Esophagus squamous epithelium (tissue), 5 donors: ENCODE measurements at regions of chr4 and their contacts with region 1.

Region 1: DNA sequence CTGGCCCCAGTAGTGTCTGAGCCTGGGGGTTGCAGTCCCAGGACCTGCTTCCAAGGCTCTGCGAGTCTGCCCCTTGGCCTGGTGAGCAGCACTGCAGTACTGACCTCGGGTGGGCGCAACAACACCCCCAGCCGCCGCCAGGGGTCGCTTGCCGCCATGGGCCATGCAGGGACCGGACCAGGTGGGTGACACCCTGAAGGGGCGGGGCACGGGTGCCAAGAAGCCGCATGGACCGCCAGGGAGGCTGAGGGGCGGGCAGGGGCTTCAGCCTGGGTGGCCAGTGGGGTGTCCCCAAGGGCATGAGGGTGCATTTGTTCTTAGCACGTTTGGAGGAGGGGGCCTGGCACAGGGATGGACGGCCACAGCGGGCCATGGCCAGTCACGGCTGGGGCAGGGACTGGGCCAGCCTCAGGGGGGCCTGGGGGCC is 25.0 kb downstream of the TACC3 start:
- DNase-seq: no peak
- H3K4me3 ChIP-seq: no peak overlapping the region
- H3K27ac ChIP-seq: no peak overlapping the region
- H3K4me1 ChIP-seq: peaks cover 12 to 36% (median 13%) of the 10 kb centered on the region in 3 donors
- H3K27me3 ChIP-seq: peaks cover 0 to 10% (median 0%) of the 10 kb centered on the region in 4 donors
- CTCF ChIP-seq: peak; percentile 56 to 85 (median 77)
- POLR2A ChIP-seq: no peak

Region 2: GRCh38 chr4:1674682-1675081 is 71.6 kb before region 1 on chr4:
- intact Hi-C with region 1: no loop called
- DNase-seq: no peak
- H3K4me3 ChIP-seq: no peak overlapping the region
- H3K27ac ChIP-seq: no peak overlapping the region
- H3K4me1 ChIP-seq: no peaks in the 10 kb centered on the region
- H3K27me3 ChIP-seq: no peaks in the 10 kb centered on the region
- CTCF ChIP-seq: no peak
- POLR2A ChIP-seq: no peak

Region 3: GRCh38 chr4:1809754-1810511 is 63.7 kb after region 1 on chr4:
- intact Hi-C with region 1: loop called (anchors 5 kb)
- DNase-seq: no peak
- H3K4me3 ChIP-seq: no peak overlapping the region
- H3K27ac ChIP-seq: peak overlapping the region in 3 of 4 donors; percentile 27 to 54 (median 27)
- H3K4me1 ChIP-seq: peaks cover 0 to 23% (median 0%) of the 10 kb centered on the region in 3 donors
- H3K27me3 ChIP-seq: no peaks in the 10 kb centered on the region
- CTCF ChIP-seq: peak; percentile 59 to 94 (median 84)
- POLR2A ChIP-seq: no peak

Region 4: GRCh38 chr4:1899149-1900086 is 153.1 kb after region 1 on chr4:
- intact Hi-C with region 1: loop called (anchors 5 kb)
- DNase-seq: peak; percentile 16
- H3K4me3 ChIP-seq: no peak overlapping the region
- H3K27ac ChIP-seq: no peak overlapping the region
- H3K4me1 ChIP-seq: peaks cover 0 to 8% (median 0%) of the 10 kb centered on the region in 3 donors
- H3K27me3 ChIP-seq: no peaks in the 10 kb centered on the region
- CTCF ChIP-seq: peak; percentile 84 to 91 (median 88)
- POLR2A ChIP-seq: no peak